HepG2 (cell line): ENCODE measurements at regions of chr14 and their contacts with region 1.

Region 1: GRCh38 chr14:39232554-39233415 is 930 bp upstream of the MIA2 start:
- DNase-seq: peak; percentile 90
- ATAC-seq: peak; percentile 84
- H3K4me3 ChIP-seq: peak overlapping the region; percentile 65 to 72 (median 65)
- H3K27ac ChIP-seq: peak overlapping the region; percentile 69
- H3K4me1 ChIP-seq: peaks cover 49% of the 10 kb centered on the region
- H3K27me3 ChIP-seq: no peaks in the 10 kb centered on the region; a peak in 1 of 5 replicates
- CTCF ChIP-seq: peak; percentile 4; the same call in 1 of the 2 replicates
- EP300 ChIP-seq: peak in 1 of 2 experiments; percentile 75; a peak in 3 of 4 replicates
- POLR2A ChIP-seq: no peak
- RAD21 ChIP-seq: peak; percentile 44

Region 2: DNA sequence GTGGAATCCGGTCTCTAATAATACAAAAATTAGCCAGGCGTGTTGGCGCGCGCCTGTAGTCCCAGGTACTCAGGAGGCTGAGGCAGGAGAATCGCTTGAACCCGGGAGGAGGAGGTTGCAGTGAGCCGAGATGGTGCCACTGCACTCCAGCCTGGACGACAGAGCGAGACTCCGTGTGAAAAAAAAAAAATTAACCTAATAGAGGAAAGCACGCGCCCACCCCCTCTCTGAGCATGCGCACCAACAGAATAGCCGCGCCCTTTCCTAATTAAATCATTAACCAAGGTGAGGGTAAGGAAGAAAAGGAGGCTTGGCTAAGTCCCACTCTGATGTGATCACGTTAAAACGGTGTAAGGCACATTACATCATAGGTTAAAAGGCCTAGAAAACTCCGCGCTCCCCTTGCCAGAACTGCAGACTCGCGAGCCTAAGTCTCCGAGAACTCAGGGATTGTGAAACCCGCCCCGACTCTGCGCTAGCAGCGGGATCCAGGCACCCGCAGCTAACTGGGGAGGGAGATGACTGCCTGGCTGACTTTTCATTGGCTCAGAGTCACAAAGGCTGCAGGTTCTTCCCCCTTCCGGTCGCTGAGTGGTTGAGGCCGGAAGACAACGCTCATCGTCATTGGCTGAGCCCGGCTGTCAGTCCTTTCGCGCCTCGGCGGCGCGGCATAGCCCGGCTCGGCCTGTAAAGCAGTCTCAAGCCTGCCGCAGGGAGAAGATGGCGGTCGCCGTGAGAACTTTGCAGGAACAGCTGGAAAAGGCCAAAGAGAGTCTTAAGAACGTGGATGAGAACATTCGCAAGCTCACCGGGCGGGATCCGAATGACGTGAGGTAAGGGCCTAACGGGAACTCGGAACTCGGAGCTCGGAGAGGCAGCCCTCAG is 58.0 kb before region 1 on chr14 and contains the start of gene PNN:
- CTCF ChIA-PET with region 1: no interaction called
- POLR2A ChIA-PET with region 1: interaction called, 79 read pairs
- in situ Hi-C with region 1: no loop called
- intact Hi-C with region 1: loop called (anchors 2 kb)
- DNase-seq: peak; percentile 100
- ATAC-seq: peak; percentile 92
- H3K4me3 ChIP-seq: peak within 1 kb of the TSS; percentile 80 to 96 (median 80)
- H3K27ac ChIP-seq: peak within 1 kb of the TSS; percentile 88
- H3K4me1 ChIP-seq: peaks cover 52% of the 10 kb centered on the region
- H3K27me3 ChIP-seq: peaks cover 0 to 2% of the 10 kb centered on the region in 2 experiments; a peak in 1 of 5 replicates
- CTCF ChIP-seq: 0 out of 2 replicates have a peak, but pooled peaks have one; percentile 2
- EP300 ChIP-seq: peak; percentile 69 to 97
- POLR2A ChIP-seq: peak in 1 of 2 experiments; percentile 98; a peak in 2 of 4 replicates
- RAD21 ChIP-seq: peak; percentile 66
- total RNA-seq, gene PNN: 110 and 214 TPM in 2 replicates

Region 3: GRCh38 chr14:39310051-39310450 is 77.3 kb after region 1 on chr14:
- CTCF ChIA-PET with region 1: no interaction called
- POLR2A ChIA-PET with region 1: interaction called, 4 read pairs
- in situ Hi-C with region 1: no loop called
- intact Hi-C with region 1: loop called (anchors 5 kb)
- DNase-seq: no peak
- ATAC-seq: no peak
- H3K4me3 ChIP-seq: no peak overlapping the region
- H3K27ac ChIP-seq: no peak overlapping the region
- H3K4me1 ChIP-seq: no peaks in the 10 kb centered on the region
- H3K27me3 ChIP-seq: no peaks in the 10 kb centered on the region
- CTCF ChIP-seq: no peak
- EP300 ChIP-seq: no peak
- POLR2A ChIP-seq: no peak
- RAD21 ChIP-seq: no peak

Region 4: DNA sequence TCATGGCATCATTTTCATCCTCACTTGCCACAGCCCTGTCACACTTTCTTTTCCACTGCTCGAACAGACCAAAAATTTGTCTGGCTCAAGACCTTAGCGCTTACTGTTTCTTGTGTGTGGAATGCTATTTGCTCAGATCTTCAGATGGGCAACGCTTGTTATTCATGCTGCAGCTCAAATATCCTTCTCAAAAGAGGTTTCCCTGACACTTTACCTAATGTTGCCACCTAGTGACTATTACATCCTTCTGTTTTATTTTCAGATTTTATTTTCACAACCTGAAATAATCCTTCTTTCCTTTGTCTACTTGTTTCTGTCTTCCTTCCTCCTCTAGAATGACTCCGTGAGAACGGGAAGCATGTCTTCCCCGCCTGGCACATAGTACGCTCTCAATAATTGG is 193.8 kb after region 1 on chr14:
- CTCF ChIA-PET with region 1: no interaction called
- POLR2A ChIA-PET with region 1: interaction called, 15 read pairs
- in situ Hi-C with region 1: loop called (anchors 5 kb)
- intact Hi-C with region 1: loop called (anchors 1 kb)
- DNase-seq: peak; percentile 56
- ATAC-seq: no peak
- H3K4me3 ChIP-seq: no peak overlapping the region
- H3K27ac ChIP-seq: no peak overlapping the region
- H3K4me1 ChIP-seq: peaks cover 31% of the 10 kb centered on the region
- H3K27me3 ChIP-seq: no peaks in the 10 kb centered on the region; a peak in 1 of 5 replicates
- CTCF ChIP-seq: peak; percentile 71
- EP300 ChIP-seq: no peak
- POLR2A ChIP-seq: no peak
- RAD21 ChIP-seq: no peak

Region 5: GRCh38 chr14:39469094-39469710 is 236.4 kb after region 1 on chr14:
- CTCF ChIA-PET with region 1: no interaction called
- POLR2A ChIA-PET with region 1: no interaction called
- in situ Hi-C with region 1: no loop called
- intact Hi-C with region 1: loop called (anchors 1 kb)
- DNase-seq: peak; percentile 74
- ATAC-seq: peak; percentile 93
- H3K4me3 ChIP-seq: peak overlapping the region in 1 of 3 experiments; percentile 14; a peak in 1 of 6 replicates
- H3K27ac ChIP-seq: no peak overlapping the region
- H3K4me1 ChIP-seq: peaks cover 10% of the 10 kb centered on the region
- H3K27me3 ChIP-seq: no peaks in the 10 kb centered on the region
- CTCF ChIP-seq: peak; percentile 94
- EP300 ChIP-seq: no peak
- POLR2A ChIP-seq: no peak
- RAD21 ChIP-seq: peak; percentile 78